ENCODE measurements at regions of chr20 and their contacts with region 1.

Region 1: GRCh38 chr20:57440678-57441520 is 49.7 kb downstream of the RBM38 start:
- DNase-seq: peak; percentile 94
- H3K4me3 ChIP-seq: peak overlapping the region in 1 of 4 donors; percentile 10
- H3K27ac ChIP-seq: peak overlapping the region; percentile 90 to 96 (median 96)
- H3K4me1 ChIP-seq: peaks cover 64 to 96% (median 94%) of the 10 kb centered on the region in 4 donors
- H3K27me3 ChIP-seq: peaks cover 0 to 6% (median 0%) of the 10 kb centered on the region in 4 donors
- CTCF ChIP-seq: no peak
- EP300 ChIP-seq: peak; percentile 75
- POLR2A ChIP-seq: peak; percentile 31

Region 2: GRCh38 chr20:57409672-57410397 is 31.1 kb before region 1 on chr20:
- intact Hi-C with region 1: loop called (anchors 5 kb)
- DNase-seq: no peak
- H3K4me3 ChIP-seq: no peak overlapping the region
- H3K27ac ChIP-seq: peak overlapping the region; percentile 93 to 95 (median 94)
- H3K4me1 ChIP-seq: peaks cover 38 to 78% (median 76%) of the 10 kb centered on the region in 4 donors
- H3K27me3 ChIP-seq: no peaks in the 10 kb centered on the region
- CTCF ChIP-seq: no peak
- EP300 ChIP-seq: no peak
- POLR2A ChIP-seq: no peak